ENCODE measurements at regions of chr3 and their contacts with region 1.

Region 1: GRCh38 chr3:137970914-137971831 is 38.8 kb upstream of the CLDN18 start:
- DNase-seq: peak; percentile 73
- H3K4me3 Mint-ChIP-seq: no peak overlapping the region
- H3K27ac Mint-ChIP-seq: no peak overlapping the region
- H3K4me1 Mint-ChIP-seq: no peaks in the 10 kb centered on the region
- H3K27me3 Mint-ChIP-seq: peaks cover 14% of the 10 kb centered on the region

Region 2: GRCh38 chr3:137105277-137105977 is 865.7 kb before region 1 on chr3:
- CTCF ChIA-PET with region 1: interaction called, 11 read pairs
- DNase-seq: no peak
- H3K4me3 Mint-ChIP-seq: no peak overlapping the region
- H3K27ac Mint-ChIP-seq: no peak overlapping the region
- H3K4me1 Mint-ChIP-seq: no peaks in the 10 kb centered on the region
- H3K27me3 Mint-ChIP-seq: peaks cover 7% of the 10 kb centered on the region

Region 3: GRCh38 chr3:138078096-138078495 is 106.9 kb after region 1 on chr3:
- CTCF ChIA-PET with region 1: no interaction called
- DNase-seq: no peak
- H3K4me3 Mint-ChIP-seq: no peak overlapping the region
- H3K27ac Mint-ChIP-seq: no peak overlapping the region
- H3K4me1 Mint-ChIP-seq: peaks cover 25% of the 10 kb centered on the region
- H3K27me3 Mint-ChIP-seq: peaks cover 38% of the 10 kb centered on the region

Region 4: DNA sequence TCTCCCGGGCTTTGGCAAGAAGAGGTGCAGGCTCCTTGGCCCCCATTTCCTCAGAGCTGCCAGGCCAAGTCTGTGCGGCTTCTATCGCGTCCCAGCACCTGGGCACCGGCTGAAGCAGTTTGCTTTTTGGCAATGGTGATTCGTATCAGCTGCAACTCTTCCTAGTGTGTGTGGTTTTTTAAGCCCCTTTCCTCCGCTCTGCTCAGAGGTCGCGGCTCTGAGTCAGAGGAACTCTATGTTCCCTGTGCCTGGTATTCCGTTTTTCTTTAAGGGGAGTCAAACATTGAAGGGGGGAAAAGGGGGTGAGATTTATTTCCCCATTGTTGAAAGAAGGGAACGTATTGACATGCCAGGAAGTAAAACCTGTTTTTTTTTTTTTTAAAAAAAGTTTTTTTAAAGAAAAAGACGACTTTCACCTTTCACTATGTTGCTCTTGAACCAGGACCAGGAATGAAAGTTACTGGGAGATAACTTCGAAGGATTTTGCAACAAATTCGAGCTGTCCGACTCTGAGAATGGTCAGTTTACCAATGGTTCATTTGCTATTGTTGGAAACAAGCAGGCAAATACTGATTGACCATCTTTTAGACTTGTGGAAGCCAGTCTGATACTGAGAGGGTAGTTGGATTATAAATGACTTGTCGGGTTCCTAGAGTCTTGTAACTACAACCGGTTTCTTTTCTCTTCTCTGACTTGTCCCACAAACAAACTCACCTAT is 217.0 kb after region 1 on chr3:
- CTCF ChIA-PET with region 1: no interaction called
- DNase-seq: no peak
- H3K4me3 Mint-ChIP-seq: peak overlapping the region; percentile 88
- H3K27ac Mint-ChIP-seq: peak overlapping the region; percentile 95
- H3K4me1 Mint-ChIP-seq: peaks cover 41% of the 10 kb centered on the region
- H3K27me3 Mint-ChIP-seq: peaks cover 14% of the 10 kb centered on the region